Breast epithelium (tissue), 4 donors: ENCODE measurements at regions of chr7 and their contacts with region 1.

Region 1: DNA sequence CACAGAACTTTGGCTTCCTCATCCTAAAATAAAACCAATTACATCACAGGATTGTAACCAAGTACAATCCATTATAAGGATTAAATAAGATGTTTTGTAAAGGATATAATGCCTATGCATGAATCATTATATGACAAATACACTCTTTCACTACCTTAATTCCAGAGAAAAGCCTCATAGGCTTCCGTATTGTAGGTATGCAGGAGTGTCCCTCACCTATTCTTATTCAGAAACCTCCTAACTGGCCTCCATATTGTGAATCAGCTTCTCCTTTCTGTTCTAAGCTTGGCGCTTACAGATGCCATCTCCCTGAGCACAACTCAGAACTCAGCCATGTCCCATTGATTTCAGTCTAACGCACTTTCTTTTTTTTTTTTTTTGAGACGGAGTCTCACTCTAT is 69.6 kb upstream of the CAPZA2 start:
- DNase-seq: no peak
- H3K4me3 ChIP-seq: no peak overlapping the region
- H3K27ac ChIP-seq: no peak overlapping the region
- H3K4me1 ChIP-seq: no peaks in the 10 kb centered on the region
- H3K27me3 ChIP-seq: no peaks in the 10 kb centered on the region
- CTCF ChIP-seq: no peak
- POLR2A ChIP-seq: no peak

Region 2: DNA sequence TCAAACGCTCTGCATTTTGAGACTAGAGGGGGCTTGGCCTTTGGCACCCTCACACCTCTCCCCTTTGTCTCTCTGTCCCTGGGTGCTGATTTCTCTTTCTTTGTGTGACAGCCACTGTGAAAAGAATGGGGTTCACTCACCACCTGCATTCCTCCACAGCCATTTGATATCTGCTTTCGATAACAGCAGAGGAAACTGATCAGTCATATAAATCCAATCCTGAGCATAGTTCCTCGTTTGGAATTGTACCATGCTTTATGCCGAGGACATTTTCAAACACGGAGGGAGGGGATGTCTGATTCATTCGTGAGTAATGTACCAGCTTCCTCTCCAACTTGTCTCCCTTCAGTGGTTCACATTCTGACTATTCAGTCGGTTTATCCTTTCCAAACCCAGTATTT is 105.0 kb before region 1 on chr7:
- intact Hi-C with region 1: loop called (anchors 5 kb)
- DNase-seq: no peak
- H3K4me3 ChIP-seq: no peak overlapping the region
- H3K27ac ChIP-seq: no peak overlapping the region
- H3K4me1 ChIP-seq: peaks cover 0 to 4% of the 10 kb centered on the region in 2 donors
- H3K27me3 ChIP-seq: no peaks in the 10 kb centered on the region
- CTCF ChIP-seq: no peak
- POLR2A ChIP-seq: no peak

Region 3: DNA sequence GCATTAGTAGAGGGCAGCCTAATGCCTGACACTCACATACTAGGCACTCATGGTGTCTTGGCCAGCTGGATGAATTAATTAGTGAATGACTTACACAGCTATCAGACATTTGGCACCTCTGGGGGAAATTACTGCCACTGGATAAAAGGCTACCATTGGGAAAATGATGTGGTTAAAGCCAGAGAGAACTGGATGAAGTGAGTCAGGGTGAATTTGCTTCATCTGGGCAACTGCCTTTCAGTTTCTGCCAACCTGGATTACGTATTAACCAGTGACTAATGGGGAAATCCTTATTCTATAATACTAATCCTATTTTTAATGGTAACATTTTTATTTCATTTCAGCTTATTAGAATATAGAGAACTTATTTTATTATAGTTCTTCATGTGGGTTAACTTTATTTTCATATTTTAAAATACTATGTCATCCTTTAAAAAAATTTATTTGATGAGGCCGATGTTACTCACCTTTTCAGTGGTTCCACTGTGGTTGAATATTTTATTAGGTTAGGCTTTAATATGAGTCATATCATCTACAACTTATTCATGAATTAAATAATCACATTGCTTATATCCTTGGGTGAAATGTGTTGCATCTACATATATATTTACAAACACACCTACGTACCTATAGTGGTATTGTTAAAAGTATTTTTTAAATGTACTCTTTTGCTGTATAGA is 16.1 kb before region 1 on chr7:
- intact Hi-C with region 1: no loop called
- DNase-seq: peak in 1 of 2 donors; percentile 48
- H3K4me3 ChIP-seq: no peak overlapping the region
- H3K27ac ChIP-seq: peak overlapping the region; percentile 40 to 76
- H3K4me1 ChIP-seq: no peaks in the 10 kb centered on the region
- H3K27me3 ChIP-seq: no peaks in the 10 kb centered on the region
- CTCF ChIP-seq: no peak
- POLR2A ChIP-seq: no peak